Naive thymus-derived CD4-positive, alpha-beta T cell (primary cell): ENCODE measurements at regions of chr3 and their contacts with region 1.

Region 1: GRCh38 chr3:109806929-109807328 is 469.6 kb upstream of the DPPA4 start:
- DNase-seq: peak in 8 of 9 donors; percentile 28 to 76 (median 66)
- ATAC-seq: peak; percentile 94
- H3K4me3 ChIP-seq: peak overlapping the region; percentile 4
- H3K4me3 Mint-ChIP-seq: peak overlapping the region; percentile 14 to 88 (median 76)
- H3K27ac ChIP-seq: peak overlapping the region; percentile 52
- H3K27ac Mint-ChIP-seq: peak overlapping the region; percentile 85 to 97 (median 89)
- H3K4me1 ChIP-seq: peaks cover 29 to 44% of the 10 kb centered on the region in 2 donors
- H3K4me1 Mint-ChIP-seq: peaks cover 18 to 62% (median 46%) of the 10 kb centered on the region in 7 donors
- H3K27me3 ChIP-seq: no peaks in the 10 kb centered on the region
- H3K27me3 Mint-ChIP-seq: peaks cover 0 to 7% (median 0%) of the 10 kb centered on the region in 5 donors

Region 2: GRCh38 chr3:108602249-108602934 is 1204.5 kb before region 1 on chr3:
- CTCF ChIA-PET with region 1: no interaction called
- POLR2A ChIA-PET with region 1: no interaction called
- intact Hi-C with region 1: loop called in 1 of 2 experiments (anchors 5 kb)
- DNase-seq: peak in 7 of 9 donors; percentile 34 to 74 (median 57)
- ATAC-seq: peak; percentile 92
- H3K4me3 ChIP-seq: peak overlapping the region; percentile 22
- H3K4me3 Mint-ChIP-seq: peak overlapping the region; percentile 25 to 81 (median 74)
- H3K27ac ChIP-seq: peak overlapping the region; percentile 69
- H3K27ac Mint-ChIP-seq: peak overlapping the region; percentile 76 to 97 (median 93)
- H3K4me1 ChIP-seq: peaks cover 38 to 46% of the 10 kb centered on the region in 2 donors
- H3K4me1 Mint-ChIP-seq: peaks cover 27 to 64% (median 54%) of the 10 kb centered on the region in 7 donors
- H3K27me3 ChIP-seq: no peaks in the 10 kb centered on the region
- H3K27me3 Mint-ChIP-seq: no peaks in the 10 kb centered on the region

Region 3: DNA sequence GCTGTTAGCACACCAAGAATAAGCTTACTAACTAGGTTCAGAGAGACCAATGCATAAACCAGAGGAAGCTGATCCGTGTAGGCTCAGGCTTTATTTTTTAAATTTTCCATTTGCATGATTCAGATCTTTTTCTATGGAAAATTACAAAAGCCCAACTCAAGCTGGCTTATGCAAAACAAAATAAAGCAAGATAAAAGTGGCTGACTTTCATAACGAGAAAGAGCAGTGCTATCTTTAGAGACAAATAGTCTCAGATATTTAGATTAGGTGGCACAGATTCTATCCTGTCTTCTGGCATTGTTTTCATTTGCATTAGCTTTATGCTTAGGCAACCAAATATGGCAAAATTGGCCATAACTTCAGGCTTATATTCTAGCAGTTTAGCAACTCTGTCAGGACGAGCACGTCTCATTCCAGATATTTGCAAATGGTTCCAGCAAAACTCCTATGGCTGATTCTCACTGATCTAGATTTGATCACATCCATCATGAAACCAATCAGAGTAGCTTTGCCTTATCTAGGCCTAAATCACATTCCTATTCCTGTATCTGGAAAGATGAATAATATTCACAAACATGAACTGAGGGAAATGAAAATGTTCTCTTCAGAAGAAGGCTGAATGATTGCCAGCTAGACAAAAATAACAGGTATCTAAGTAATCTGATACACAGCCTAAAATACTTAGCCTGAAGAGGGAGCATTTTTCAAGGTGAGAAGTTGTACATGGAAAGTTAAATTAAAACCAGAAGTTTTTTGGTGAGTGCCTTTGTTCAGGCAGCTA is 253.1 kb before region 1 on chr3:
- CTCF ChIA-PET with region 1: no interaction called
- POLR2A ChIA-PET with region 1: no interaction called
- intact Hi-C with region 1: no loop called
- DNase-seq: no peak
- ATAC-seq: no peak
- H3K4me3 ChIP-seq: no peak overlapping the region
- H3K4me3 Mint-ChIP-seq: no peak overlapping the region
- H3K27ac ChIP-seq: no peak overlapping the region
- H3K27ac Mint-ChIP-seq: no peak overlapping the region
- H3K4me1 ChIP-seq: no peaks in the 10 kb centered on the region
- H3K4me1 Mint-ChIP-seq: peaks cover 0 to 1% (median 0%) of the 10 kb centered on the region in 7 donors
- H3K27me3 ChIP-seq: no peaks in the 10 kb centered on the region
- H3K27me3 Mint-ChIP-seq: peaks cover 0 to 8% (median 0%) of the 10 kb centered on the region in 5 donors

Region 4: DNA sequence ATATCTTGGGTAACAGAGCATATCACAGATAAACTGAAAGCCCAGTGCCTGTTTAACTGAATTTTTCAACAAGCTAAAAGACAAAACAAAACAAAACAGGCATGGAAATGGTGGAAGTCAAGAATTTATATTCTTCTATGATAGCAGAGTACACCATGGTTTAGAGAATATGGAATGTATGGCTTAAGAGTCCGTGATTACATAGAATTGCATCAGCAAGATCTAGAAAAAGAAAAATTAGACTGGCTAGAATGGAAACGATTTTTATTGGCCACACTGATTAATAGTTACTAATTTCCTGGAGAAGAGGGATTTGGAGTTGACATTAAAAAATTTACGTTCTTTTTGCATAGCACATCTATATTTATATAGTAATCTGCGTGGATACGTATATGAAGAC is 34.4 kb before region 1 on chr3:
- CTCF ChIA-PET with region 1: no interaction called
- POLR2A ChIA-PET with region 1: no interaction called
- intact Hi-C with region 1: loop called in 1 of 2 experiments (anchors 5 kb)
- DNase-seq: no peak
- ATAC-seq: no peak
- H3K4me3 ChIP-seq: no peak overlapping the region
- H3K4me3 Mint-ChIP-seq: peak overlapping the region in 1 of 10 donors; percentile 10
- H3K27ac ChIP-seq: no peak overlapping the region
- H3K27ac Mint-ChIP-seq: no peak overlapping the region
- H3K4me1 ChIP-seq: no peaks in the 10 kb centered on the region
- H3K4me1 Mint-ChIP-seq: peaks cover 0 to 27% (median 22%) of the 10 kb centered on the region in 7 donors
- H3K27me3 ChIP-seq: no peaks in the 10 kb centered on the region
- H3K27me3 Mint-ChIP-seq: no peaks in the 10 kb centered on the region

Region 5: DNA sequence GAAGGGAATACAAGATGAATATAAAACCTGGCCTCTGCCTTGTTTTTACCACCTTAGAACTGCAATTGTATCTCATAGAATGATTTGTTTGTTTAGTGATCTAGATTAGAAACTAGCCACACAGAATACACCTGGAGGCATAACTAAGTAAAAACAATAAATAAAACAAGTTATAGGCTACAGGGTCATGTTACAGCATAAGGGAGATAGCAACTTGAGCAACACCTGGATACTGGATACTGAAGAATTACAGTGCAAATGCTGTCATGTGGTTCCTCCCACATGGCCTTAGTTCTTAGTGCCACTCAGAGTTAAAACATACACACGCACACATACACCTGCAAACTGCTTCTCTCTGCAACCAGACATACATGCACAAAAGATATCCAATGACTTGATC is 93.8 kb after region 1 on chr3:
- CTCF ChIA-PET with region 1: no interaction called
- POLR2A ChIA-PET with region 1: no interaction called
- intact Hi-C with region 1: loop called in 1 of 2 experiments (anchors 2 kb)
- DNase-seq: no peak
- ATAC-seq: no peak
- H3K4me3 ChIP-seq: no peak overlapping the region
- H3K4me3 Mint-ChIP-seq: peak overlapping the region in 4 of 10 donors; percentile 10 to 40 (median 26)
- H3K27ac ChIP-seq: no peak overlapping the region
- H3K27ac Mint-ChIP-seq: peak overlapping the region in 5 of 9 donors; percentile 4 to 17 (median 15)
- H3K4me1 ChIP-seq: peaks cover 6 to 9% of the 10 kb centered on the region in 2 donors
- H3K4me1 Mint-ChIP-seq: peaks cover 6 to 24% (median 21%) of the 10 kb centered on the region in 7 donors
- H3K27me3 ChIP-seq: no peaks in the 10 kb centered on the region
- H3K27me3 Mint-ChIP-seq: no peaks in the 10 kb centered on the region

Region 6: DNA sequence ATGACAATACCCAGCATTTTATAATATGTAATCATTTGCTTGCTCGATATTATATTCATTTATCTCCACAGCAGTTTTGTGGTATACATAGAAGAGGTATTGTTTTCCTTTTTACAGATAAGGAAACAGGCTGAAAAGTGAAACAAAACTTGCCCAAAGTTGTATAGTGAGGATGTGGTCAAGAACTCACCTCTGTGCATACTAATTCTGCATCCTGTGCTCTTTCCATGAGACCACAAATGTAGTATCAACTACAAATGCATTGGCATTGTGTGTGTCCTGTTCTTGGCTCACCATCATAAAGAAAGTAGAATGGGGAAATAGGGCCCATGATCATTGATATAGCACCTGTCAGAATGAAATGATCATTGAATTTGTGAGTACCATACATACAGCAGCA is 1432.0 kb after region 1 on chr3:
- CTCF ChIA-PET with region 1: no interaction called
- POLR2A ChIA-PET with region 1: no interaction called
- intact Hi-C with region 1: loop called (anchors 5 kb)
- DNase-seq: peak in 6 of 9 donors; percentile 16 to 47 (median 34)
- ATAC-seq: peak; percentile 75
- H3K4me3 ChIP-seq: no peak overlapping the region
- H3K4me3 Mint-ChIP-seq: peak overlapping the region in 8 of 10 donors; percentile 0 to 76 (median 54)
- H3K27ac ChIP-seq: peak overlapping the region; percentile 4
- H3K27ac Mint-ChIP-seq: peak overlapping the region; percentile 0 to 90 (median 64)
- H3K4me1 ChIP-seq: peaks cover 6 to 15% of the 10 kb centered on the region in 2 donors
- H3K4me1 Mint-ChIP-seq: peaks cover 11 to 47% (median 35%) of the 10 kb centered on the region in 7 donors
- H3K27me3 ChIP-seq: no peaks in the 10 kb centered on the region
- H3K27me3 Mint-ChIP-seq: no peaks in the 10 kb centered on the region

Region 7: GRCh38 chr3:111610189-111610588 is 1803.3 kb after region 1 on chr3:
- CTCF ChIA-PET with region 1: no interaction called
- POLR2A ChIA-PET with region 1: interaction called, 3 read pairs
- intact Hi-C with region 1: loop called (anchors 5 to 10 kb)
- DNase-seq: peak in 7 of 9 donors; percentile 79 to 91 (median 89)
- ATAC-seq: peak; percentile 94
- H3K4me3 ChIP-seq: peak overlapping the region; percentile 2
- H3K4me3 Mint-ChIP-seq: peak overlapping the region; percentile 48 to 84 (median 74)
- H3K27ac ChIP-seq: peak overlapping the region; percentile 47
- H3K27ac Mint-ChIP-seq: peak overlapping the region; percentile 41 to 96 (median 90)
- H3K4me1 ChIP-seq: peaks cover 27 to 38% of the 10 kb centered on the region in 2 donors
- H3K4me1 Mint-ChIP-seq: peaks cover 32 to 90% (median 61%) of the 10 kb centered on the region in 7 donors
- H3K27me3 ChIP-seq: no peaks in the 10 kb centered on the region
- H3K27me3 Mint-ChIP-seq: no peaks in the 10 kb centered on the region